Astrocyte of the cerebellum (primary cell): ENCODE measurements at regions of chr7 and their contacts with region 1.

Region 1: GRCh38 chr7:85685901-85686300 is 499.0 kb upstream of the SEMA3D start:
- DNase-seq: no peak
- H3K4me3 ChIP-seq: no peak overlapping the region
- CTCF ChIP-seq: no peak

Region 2: GRCh38 chr7:85634946-85635345 is 51.0 kb before region 1 on chr7:
- in situ Hi-C with region 1: no loop called
- DNase-seq: no peak
- H3K4me3 ChIP-seq: no peak overlapping the region
- CTCF ChIP-seq: no peak

Region 3: DNA sequence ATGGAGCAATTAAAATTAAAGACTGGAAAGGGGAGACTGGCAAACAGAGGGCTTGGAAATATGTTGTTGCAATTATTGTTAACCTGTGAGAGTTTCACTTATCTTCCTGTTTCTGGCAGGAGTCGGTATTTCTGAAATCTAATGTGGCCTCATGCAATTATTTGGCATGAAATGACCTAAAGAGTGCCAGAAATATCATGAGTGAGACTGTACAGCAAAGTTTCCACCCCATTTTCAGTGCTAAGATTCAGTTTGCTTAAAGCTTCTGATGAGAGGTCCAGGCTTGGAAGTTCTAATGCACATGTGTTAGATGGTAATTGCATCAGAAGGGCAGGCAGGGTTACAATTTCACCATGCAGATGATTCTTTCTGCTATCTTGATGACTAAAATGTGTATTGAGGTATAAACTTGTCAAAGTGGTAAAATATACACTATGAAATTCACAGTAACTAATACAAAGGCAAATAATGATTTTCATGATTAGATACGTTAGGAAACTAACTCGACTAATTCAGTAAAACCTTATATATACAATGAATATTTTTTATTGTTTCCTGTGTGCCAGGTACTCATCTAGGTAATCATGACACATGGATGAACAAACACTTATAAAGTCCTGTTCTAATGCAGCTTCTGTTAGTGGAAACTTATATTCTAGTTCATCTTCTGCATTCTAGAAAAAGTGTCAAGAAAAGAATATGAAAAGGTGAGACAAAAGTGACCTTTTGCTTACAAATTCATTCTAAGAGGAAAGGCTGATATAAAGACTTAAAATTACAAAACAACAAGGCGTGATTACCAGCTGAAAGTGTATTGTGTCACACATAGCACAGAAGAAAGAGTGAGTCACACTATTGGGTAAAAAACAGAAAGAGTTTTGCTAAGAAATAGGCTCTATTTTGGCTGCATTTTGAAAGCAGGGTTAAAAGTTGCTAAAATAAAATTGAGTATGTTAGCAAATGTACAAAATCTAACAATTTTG is 34.4 kb after region 1 on chr7:
- in situ Hi-C with region 1: loop called (anchors 5 kb)
- DNase-seq: peak; percentile 9
- H3K4me3 ChIP-seq: no peak overlapping the region
- CTCF ChIP-seq: no peak